Right lobe of liver (tissue), 6 donors: ENCODE measurements at regions of chr6 and their contacts with region 1.

Region 1: GRCh38 chr6:118968416-118968815 is 33.5 kb upstream of the MCM9 start:
- DNase-seq: no peak
- ATAC-seq: peak; percentile 53 to 72 (median 64)
- H3K4me3 ChIP-seq: no peak overlapping the region
- H3K27ac ChIP-seq: no peak overlapping the region
- H3K4me1 ChIP-seq: no peaks in the 10 kb centered on the region
- H3K27me3 ChIP-seq: no peaks in the 10 kb centered on the region
- CTCF ChIP-seq: peak; percentile 44 to 56 (median 49)
- POLR2A ChIP-seq: no peak

Region 2: GRCh38 chr6:119105282-119105681 is 136.9 kb after region 1 on chr6:
- intact Hi-C with region 1: loop called (anchors 5 kb)
- DNase-seq: no peak
- ATAC-seq: no peak
- H3K4me3 ChIP-seq: no peak overlapping the region
- H3K27ac ChIP-seq: no peak overlapping the region
- H3K4me1 ChIP-seq: no peaks in the 10 kb centered on the region
- H3K27me3 ChIP-seq: no peaks in the 10 kb centered on the region
- CTCF ChIP-seq: no peak
- POLR2A ChIP-seq: no peak

Region 3: DNA sequence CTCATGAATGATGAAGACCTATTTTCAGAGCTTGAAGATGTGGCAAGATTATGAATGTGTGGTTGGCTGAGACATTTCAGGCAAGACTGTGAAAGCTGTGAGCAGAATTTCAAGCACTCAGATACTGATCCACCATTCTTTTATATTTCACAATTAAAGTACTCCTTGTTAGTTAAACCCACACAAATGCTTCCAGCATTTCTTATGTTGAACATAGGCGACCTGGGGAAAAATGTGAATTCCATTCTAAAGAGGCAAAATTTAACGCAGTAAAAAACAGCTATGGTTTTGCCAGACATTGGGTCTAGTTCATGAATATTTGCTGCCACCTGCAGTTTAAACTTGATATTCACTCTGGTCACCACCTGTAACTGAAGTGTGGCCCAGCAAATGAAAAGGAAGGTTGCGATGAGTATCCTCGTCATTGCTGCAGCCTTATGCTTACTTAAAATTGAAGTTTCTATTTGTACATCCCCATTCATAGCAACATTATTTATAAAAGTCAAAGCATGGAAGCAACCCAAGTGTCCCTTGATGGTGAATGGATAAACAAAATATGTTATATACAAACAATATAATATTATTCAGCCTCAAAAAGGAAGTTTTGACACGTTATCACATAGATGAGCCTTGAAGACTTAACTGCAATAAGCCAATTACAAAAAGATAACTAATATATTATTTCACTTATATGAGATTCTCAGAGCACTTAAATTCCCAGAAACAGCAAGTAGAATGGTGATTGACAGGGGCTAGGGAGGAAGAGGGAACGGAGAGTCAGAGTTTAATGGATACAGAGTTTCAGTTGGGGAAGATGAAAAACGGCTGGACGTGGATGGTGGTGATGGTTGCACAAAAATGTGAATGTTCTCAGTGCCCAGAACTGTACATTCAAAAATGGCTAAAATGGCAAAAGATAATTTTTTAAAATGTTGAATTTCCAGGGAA is 142.5 kb after region 1 on chr6:
- intact Hi-C with region 1: loop called (anchors 5 kb)
- DNase-seq: peak in 1 of 3 donors; percentile 49
- ATAC-seq: peak; percentile 93 to 99 (median 94)
- H3K4me3 ChIP-seq: no peak overlapping the region
- H3K27ac ChIP-seq: no peak overlapping the region
- H3K4me1 ChIP-seq: no peaks in the 10 kb centered on the region
- H3K27me3 ChIP-seq: no peaks in the 10 kb centered on the region
- CTCF ChIP-seq: peak; percentile 63 to 83 (median 68)
- POLR2A ChIP-seq: no peak

Region 4: GRCh38 chr6:119186490-119186889 is 218.1 kb after region 1 on chr6:
- intact Hi-C with region 1: no loop called
- DNase-seq: no peak
- ATAC-seq: no peak
- H3K4me3 ChIP-seq: no peak overlapping the region
- H3K27ac ChIP-seq: no peak overlapping the region
- H3K4me1 ChIP-seq: no peaks in the 10 kb centered on the region
- H3K27me3 ChIP-seq: no peaks in the 10 kb centered on the region
- CTCF ChIP-seq: no peak
- POLR2A ChIP-seq: no peak